ENCODE measurements at regions of chr12 and their contacts with region 1.

Region 1: DNA sequence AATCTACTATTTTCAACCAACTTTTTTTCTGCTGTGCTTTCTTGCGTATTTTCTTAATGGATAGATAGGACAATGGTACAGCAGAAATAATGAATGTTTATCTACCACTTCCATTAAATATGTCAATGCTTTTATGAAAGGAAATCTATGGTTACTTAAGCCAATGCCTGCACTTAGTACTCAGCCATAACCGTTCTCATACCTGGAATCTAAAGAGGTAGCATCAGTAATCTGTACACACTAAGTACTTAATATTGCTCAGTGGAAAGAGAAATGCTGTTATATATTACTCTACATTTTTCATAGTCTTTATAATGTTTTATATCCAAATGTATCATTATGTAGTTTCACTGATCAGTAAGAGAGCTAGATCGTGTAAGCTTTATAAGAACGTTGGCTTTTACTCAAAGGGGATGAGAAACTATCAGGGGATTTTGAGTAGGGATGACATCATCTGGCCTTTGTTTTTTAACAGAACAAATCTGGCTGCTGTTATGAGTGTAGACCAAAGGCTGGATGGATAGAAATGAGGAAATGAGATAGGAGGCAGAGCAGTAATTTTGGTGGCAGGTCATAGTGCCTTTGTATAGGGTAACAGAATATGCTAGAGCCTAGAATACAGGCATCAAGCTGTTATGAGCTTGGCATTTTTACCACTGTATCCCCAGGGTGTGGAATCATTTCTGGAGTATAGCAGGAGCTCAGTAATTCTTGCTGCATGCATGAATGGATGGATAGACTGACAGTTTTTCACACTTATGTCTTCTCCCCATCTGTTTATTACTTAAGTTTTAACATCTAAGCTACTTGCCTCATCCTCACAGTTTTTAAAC is 34.0 kb downstream of the ALG10B start:
- DNase-seq: peak; percentile 28
- H3K4me3 ChIP-seq: no peak overlapping the region
- H3K27ac ChIP-seq: no peak overlapping the region
- H3K4me1 ChIP-seq: no peaks in the 10 kb centered on the region
- H3K27me3 ChIP-seq: no peaks in the 10 kb centered on the region
- CTCF ChIP-seq: no peak

Region 2: DNA sequence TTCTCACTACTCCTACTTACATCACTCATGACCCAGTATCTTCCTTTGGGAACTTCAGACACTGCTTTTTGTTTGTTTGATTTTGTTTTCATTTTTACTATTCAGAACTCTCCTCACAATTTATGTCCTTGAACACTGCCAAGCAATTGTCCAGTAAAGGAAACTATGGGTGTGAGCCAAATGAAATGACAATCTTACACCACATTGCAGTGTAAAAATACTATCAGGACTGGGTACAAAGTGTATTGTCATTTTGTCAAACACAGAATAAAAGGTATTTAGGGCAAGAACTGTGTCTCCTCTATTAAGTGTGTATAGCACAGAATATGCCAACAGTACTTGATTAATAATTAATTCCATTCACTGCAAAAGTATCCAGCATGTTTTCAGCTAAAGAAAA is 165.4 kb after region 1 on chr12:
- CTCF ChIA-PET with region 1: no interaction called
- dilution Hi-C with region 1: no loop called
- in situ Hi-C with region 1: no loop called
- intact Hi-C with region 1: loop called (anchors 10 kb)
- DNase-seq: no peak
- H3K4me3 ChIP-seq: no peak overlapping the region
- H3K27ac ChIP-seq: no peak overlapping the region
- H3K4me1 ChIP-seq: no peaks in the 10 kb centered on the region
- H3K27me3 ChIP-seq: no peaks in the 10 kb centered on the region
- CTCF ChIP-seq: no peak